GM12878 (cell line): ENCODE measurements at regions of chr3 and their contacts with region 1.

Region 1: DNA sequence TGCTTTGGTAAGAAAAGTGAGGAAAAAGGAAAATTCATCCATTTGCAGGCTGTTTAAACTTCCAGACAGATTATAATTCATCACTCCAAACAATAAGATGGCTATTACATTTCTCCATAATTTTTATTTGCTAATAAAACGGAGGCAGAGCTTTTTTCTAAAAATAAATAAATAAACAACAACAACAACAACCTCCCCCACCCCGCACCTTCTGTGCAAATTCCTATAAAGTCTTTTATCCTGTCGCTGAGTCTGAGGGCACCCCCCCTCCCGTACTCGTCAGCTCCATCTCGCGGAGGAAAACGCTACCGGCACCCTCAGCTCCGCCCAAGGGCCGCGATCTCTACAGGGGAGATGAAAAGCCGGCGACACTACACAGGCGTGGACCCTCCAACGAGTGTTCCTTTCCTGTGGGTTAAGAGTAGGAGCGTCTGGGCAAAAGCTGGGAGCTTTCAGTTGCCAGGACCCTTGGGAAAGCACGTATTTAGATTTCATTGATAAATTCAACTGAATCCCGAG is 1.0 kb upstream of the ATP1B3 start:
- DNase-seq: peak; percentile 31
- ATAC-seq: peak; percentile 83
- H3K4me3 ChIP-seq: peak overlapping the region; percentile 79
- H3K27ac ChIP-seq: peak overlapping the region; percentile 69
- H3K4me1 ChIP-seq: no peaks in the 10 kb centered on the region
- H3K27me3 ChIP-seq: no peaks in the 10 kb centered on the region
- CTCF ChIP-seq: peak; percentile 83 to 90 (median 87)
- EP300 ChIP-seq: no peak
- POLR2A ChIP-seq: 0 out of 2 replicates have a peak, but pooled peaks have one; percentile 11
- RAD21 ChIP-seq: peak; percentile 66

Region 2: DNA sequence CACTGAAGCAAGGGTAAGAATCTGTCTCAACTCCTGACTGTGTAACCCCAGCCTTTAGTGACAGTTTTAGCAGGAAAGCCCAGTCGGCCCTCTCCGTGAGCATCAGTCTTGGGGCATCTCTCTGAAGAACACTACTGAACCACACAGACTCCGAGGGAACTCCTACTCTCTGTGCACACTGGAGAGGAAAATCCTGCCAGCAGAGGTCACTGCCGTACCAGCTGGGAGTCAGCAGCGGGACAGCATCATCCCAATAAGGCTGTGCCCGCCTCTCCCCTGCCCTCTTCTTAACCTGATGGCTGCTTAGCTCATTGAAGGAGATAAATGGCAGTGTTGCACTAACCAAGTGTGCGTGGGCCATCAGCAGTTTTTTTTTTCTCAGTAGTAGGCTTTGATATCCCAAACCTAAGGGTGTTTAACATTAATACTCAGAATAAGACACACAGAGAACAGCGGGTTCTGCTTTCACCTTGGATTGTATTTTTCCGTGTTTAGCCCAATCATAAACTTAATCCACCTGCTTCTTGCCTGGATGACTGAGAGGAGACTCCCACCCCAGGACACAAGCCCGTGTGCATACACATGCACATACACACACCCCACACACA is 415.2 kb before region 1 on chr3:
- CTCF ChIA-PET with region 1: interaction called, 3 read pairs
- POLR2A ChIA-PET with region 1: no interaction called
- RAD21 ChIA-PET with region 1: no interaction called
- SMC1A ChIA-PET with region 1: no interaction called
- in situ Hi-C with region 1: loop called (anchors 10 kb)
- intact Hi-C with region 1: no loop called
- DNase-seq: no peak
- ATAC-seq: peak; percentile 100
- H3K4me3 ChIP-seq: no peak overlapping the region
- H3K27ac ChIP-seq: no peak overlapping the region
- H3K4me1 ChIP-seq: peaks cover 3% of the 10 kb centered on the region; the same call in 1 of the 2 replicates
- H3K27me3 ChIP-seq: no peaks in the 10 kb centered on the region
- CTCF ChIP-seq: peak; percentile 79 to 96 (median 87)
- EP300 ChIP-seq: no peak
- POLR2A ChIP-seq: no peak
- RAD21 ChIP-seq: peak; percentile 89

Region 3: DNA sequence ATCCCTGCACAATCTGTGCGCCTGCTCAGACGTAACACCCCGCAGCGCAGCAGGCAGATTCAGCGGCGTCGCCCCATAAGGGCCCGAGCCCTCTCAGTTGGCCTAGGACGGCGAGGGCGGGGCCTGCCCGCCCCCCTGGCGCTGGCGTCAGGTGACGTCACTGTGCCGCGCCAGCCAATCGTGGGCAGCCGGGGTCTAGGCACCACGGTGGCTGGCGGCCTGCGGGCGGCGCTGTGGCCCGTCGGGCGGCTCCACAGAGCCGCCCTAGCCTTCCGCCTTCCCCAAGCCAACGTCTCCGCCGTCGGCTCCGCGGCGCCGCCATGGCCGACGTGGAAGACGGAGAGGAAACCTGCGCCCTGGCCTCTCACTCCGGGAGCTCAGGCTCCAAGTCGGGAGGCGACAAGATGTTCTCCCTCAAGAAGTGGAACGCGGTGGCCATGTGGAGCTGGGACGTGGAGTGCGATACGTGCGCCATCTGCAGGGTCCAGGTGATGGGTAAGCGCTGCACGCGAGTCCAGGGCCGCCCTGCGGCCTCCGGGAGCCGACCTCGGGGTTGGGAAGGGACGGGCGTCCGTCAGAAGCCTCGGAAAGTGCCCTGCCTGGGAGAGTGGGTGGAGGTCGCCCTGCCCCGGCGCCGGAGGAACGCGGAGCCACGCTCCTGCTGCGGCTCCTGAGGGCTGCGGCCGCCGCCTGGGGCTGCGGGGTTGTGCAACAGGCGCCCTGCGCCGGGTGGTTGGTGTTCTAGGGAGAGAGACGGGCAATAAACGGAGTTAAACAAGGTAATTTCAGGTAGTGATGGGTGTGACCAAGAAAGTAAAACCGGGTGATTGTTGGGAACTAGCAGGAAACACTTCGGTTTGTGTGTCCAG is 137.2 kb before region 1 on chr3 and contains the start of gene RNF7:
- CTCF ChIA-PET with region 1: interaction called, 33 read pairs
- POLR2A ChIA-PET with region 1: interaction called, 12 read pairs
- RAD21 ChIA-PET with region 1: interaction called, 23 read pairs
- SMC1A ChIA-PET with region 1: interaction called, 8 read pairs
- in situ Hi-C with region 1: no loop called
- intact Hi-C with region 1: loop called (anchors 1 kb)
- DNase-seq: peak; percentile 83
- ATAC-seq: peak; percentile 95
- H3K4me3 ChIP-seq: peak within 1 kb of the TSS; percentile 91
- H3K27ac ChIP-seq: peak within 1 kb of the TSS; percentile 87
- H3K4me1 ChIP-seq: 0 out of 2 replicates have a peak, but pooled peaks cover 5% of the 10 kb centered on the region
- H3K27me3 ChIP-seq: no peaks in the 10 kb centered on the region
- CTCF ChIP-seq: peak; percentile 79 to 98 (median 94); a peak in 5 of 6 replicates
- EP300 ChIP-seq: no peak
- POLR2A ChIP-seq: peak; percentile 97
- RAD21 ChIP-seq: peak; percentile 61
- polyA plus RNA-seq, gene RNF7: 83.8 to 98.6 TPM

Region 4: GRCh38 chr3:141840737-141841544 is 34.5 kb before region 1 on chr3:
- CTCF ChIA-PET with region 1: no interaction called
- POLR2A ChIA-PET with region 1: no interaction called
- RAD21 ChIA-PET with region 1: no interaction called
- SMC1A ChIA-PET with region 1: no interaction called
- in situ Hi-C with region 1: no loop called
- intact Hi-C with region 1: no loop called
- DNase-seq: no peak
- ATAC-seq: no peak
- H3K4me3 ChIP-seq: no peak overlapping the region
- H3K27ac ChIP-seq: no peak overlapping the region
- H3K4me1 ChIP-seq: no peaks in the 10 kb centered on the region
- H3K27me3 ChIP-seq: no peaks in the 10 kb centered on the region
- CTCF ChIP-seq: no peak
- EP300 ChIP-seq: no peak
- POLR2A ChIP-seq: no peak
- RAD21 ChIP-seq: no peak

Region 5: DNA sequence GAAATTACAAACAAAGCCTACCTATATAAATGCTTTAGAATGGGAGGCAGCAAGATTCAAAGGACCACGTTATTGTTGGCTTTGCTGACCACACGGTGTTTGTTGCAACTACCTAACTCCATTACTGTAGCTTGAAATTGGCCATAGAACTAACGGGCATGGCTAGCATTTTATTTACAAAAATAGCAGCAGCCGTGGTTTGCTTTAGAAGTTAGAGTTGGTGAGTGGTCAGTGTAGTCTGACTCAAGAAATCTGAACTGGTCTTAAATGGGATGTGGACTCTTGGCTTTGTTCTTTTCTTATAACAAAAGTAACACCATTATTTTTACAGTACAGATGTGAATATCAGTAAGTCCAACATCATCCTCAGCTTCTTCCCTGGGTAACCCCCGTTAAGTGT is 11.6 kb after region 1 on chr3:
- CTCF ChIA-PET with region 1: interaction called, 13 read pairs
- POLR2A ChIA-PET with region 1: interaction called, 3 read pairs
- RAD21 ChIA-PET with region 1: interaction called, 5 read pairs
- SMC1A ChIA-PET with region 1: interaction called, 10 read pairs
- in situ Hi-C with region 1: no loop called
- intact Hi-C with region 1: no loop called
- DNase-seq: no peak
- ATAC-seq: no peak
- H3K4me3 ChIP-seq: no peak overlapping the region
- H3K27ac ChIP-seq: no peak overlapping the region
- H3K4me1 ChIP-seq: no peaks in the 10 kb centered on the region
- H3K27me3 ChIP-seq: no peaks in the 10 kb centered on the region
- CTCF ChIP-seq: no peak
- EP300 ChIP-seq: no peak
- POLR2A ChIP-seq: no peak
- RAD21 ChIP-seq: no peak

Region 6: GRCh38 chr3:141894524-141895178 is 19.2 kb after region 1 on chr3:
- CTCF ChIA-PET with region 1: interaction called, 6 read pairs
- POLR2A ChIA-PET with region 1: interaction called, 3 read pairs
- RAD21 ChIA-PET with region 1: no interaction called
- SMC1A ChIA-PET with region 1: interaction called, 12 read pairs
- in situ Hi-C with region 1: no loop called
- intact Hi-C with region 1: no loop called
- DNase-seq: no peak
- ATAC-seq: no peak
- H3K4me3 ChIP-seq: no peak overlapping the region
- H3K27ac ChIP-seq: no peak overlapping the region
- H3K4me1 ChIP-seq: no peaks in the 10 kb centered on the region
- H3K27me3 ChIP-seq: no peaks in the 10 kb centered on the region
- CTCF ChIP-seq: no peak
- EP300 ChIP-seq: no peak
- POLR2A ChIP-seq: no peak
- RAD21 ChIP-seq: no peak

Region 7: DNA sequence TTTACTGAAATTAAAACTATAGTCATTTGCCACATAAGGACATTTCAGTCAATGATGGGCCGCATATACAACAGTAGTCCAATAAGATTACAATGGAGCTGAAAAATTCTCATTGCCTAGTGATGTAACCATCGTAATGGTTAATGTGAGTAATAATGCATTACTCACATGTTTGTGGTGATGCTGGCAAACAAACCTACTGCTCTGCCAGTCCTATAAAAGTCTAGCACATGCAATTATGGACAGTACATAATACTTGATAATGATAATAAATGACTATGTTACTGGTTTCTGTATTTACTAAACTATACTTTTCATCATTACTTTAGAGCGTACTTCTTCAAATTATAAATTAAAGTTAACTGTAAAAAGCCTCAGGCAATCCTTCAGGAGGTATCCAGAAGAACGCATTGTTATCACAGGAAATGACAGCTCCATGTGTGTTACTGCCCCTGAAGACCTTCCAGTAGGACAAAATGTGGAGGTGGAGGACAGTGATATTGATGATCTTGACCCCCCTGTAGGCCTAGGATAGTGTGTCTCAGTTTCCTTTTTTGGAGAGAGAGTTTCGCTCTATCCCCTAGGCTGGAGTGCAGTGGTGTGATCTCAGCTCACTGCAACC is 103.7 kb after region 1 on chr3:
- CTCF ChIA-PET with region 1: no interaction called
- POLR2A ChIA-PET with region 1: no interaction called
- RAD21 ChIA-PET with region 1: no interaction called
- SMC1A ChIA-PET with region 1: no interaction called
- in situ Hi-C with region 1: no loop called
- intact Hi-C with region 1: no loop called
- DNase-seq: no peak
- ATAC-seq: no peak
- H3K4me3 ChIP-seq: no peak overlapping the region
- H3K27ac ChIP-seq: no peak overlapping the region
- H3K4me1 ChIP-seq: no peaks in the 10 kb centered on the region
- H3K27me3 ChIP-seq: no peaks in the 10 kb centered on the region
- CTCF ChIP-seq: no peak
- EP300 ChIP-seq: no peak
- POLR2A ChIP-seq: no peak
- RAD21 ChIP-seq: no peak